A549 (cell line): ENCODE measurements at regions of chr10 and their contacts with region 1.

Region 1: DNA sequence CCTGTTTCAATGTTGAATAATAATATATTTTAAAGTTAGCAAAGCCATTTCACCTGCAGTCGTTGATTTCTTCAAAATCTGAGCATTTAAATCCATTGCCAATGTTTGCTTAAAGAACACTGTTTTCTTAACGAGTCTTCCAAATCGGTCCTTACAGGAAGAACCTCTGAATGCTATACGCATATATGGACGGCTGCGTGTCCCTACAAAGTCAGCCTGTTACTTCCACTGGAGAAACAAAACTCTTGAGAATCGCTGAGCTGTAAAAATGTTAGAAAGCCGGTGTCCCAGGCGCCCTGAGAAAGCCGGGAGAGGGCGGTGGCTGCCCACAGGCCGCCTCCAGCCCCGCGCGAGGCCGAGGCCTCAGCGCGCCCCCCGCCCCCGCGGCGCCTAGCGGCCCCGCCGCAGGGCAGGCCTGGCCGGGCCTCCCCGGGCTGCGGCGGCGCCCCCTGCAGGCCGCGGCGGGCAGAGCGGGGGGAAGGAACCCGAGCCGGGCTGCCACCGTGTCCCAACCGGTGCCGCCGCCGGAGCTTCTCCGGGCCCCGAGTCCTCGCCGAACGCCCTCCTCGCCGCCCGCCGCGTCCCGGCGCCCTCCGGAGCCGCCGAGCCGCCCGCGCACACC is at the start of gene FHIP2A:
- DNase-seq: peak; percentile 61 to 75
- ATAC-seq: peak; percentile 89
- H3K4me3 ChIP-seq: peak within 1 kb of the TSS; percentile 70
- H3K27ac ChIP-seq: peak within 1 kb of the TSS; percentile 88 to 100
- H3K4me1 ChIP-seq: peaks cover 36% of the 10 kb centered on the region
- CTCF ChIP-seq: peak; percentile 95
- EP300 ChIP-seq: no peak
- POLR2A ChIP-seq: 0 out of 2 replicates have a peak, but pooled peaks have one; percentile 19
- RAD21 ChIP-seq: peak; percentile 30 to 53; a peak in 3 of 5 replicates
- polyA plus RNA-seq, gene FHIP2A: 18.2 and 18.4 TPM in 2 replicates

Region 2: GRCh38 chr10:114603948-114604347 is 217.5 kb before region 1 on chr10:
- CTCF ChIA-PET with region 1: no interaction called
- POLR2A ChIA-PET with region 1: no interaction called
- DNase-seq: peak in 1 of 2 experiments; percentile 32
- ATAC-seq: peak in 1 of 2 experiments; percentile 76; a peak in 3 of 6 replicates
- H3K4me3 ChIP-seq: no peak overlapping the region
- H3K27ac ChIP-seq: peak overlapping the region; percentile 70 to 74
- H3K4me1 ChIP-seq: peaks cover 47% of the 10 kb centered on the region
- CTCF ChIP-seq: no peak
- EP300 ChIP-seq: no peak
- POLR2A ChIP-seq: no peak
- RAD21 ChIP-seq: no peak

Region 3: DNA sequence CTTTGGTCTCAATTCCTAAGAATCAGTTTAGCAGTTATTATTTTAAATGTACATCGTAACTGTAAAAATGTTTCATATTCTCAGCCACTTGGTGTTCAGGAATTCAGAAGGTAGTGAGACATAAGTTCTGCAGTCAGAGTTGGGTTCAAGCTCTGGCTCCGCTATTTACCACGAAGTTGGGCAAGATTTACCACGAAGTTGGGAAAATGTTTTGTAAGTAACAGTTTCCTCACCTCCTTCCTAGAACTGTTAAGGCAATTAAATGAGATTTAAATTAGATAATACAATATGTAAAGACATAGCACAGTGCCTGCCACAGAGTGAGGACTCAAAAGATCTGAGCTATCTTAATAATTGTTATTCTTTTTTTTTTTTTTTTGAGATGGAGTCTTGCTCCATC is 147.1 kb before region 1 on chr10:
- CTCF ChIA-PET with region 1: no interaction called
- POLR2A ChIA-PET with region 1: no interaction called
- DNase-seq: no peak
- ATAC-seq: no peak
- H3K4me3 ChIP-seq: no peak overlapping the region
- H3K27ac ChIP-seq: no peak overlapping the region
- H3K4me1 ChIP-seq: peaks cover 18% of the 10 kb centered on the region
- CTCF ChIP-seq: no peak
- EP300 ChIP-seq: no peak
- POLR2A ChIP-seq: no peak
- RAD21 ChIP-seq: no peak

Region 4: GRCh38 chr10:114758331-114758730 is 63.1 kb before region 1 on chr10:
- CTCF ChIA-PET with region 1: no interaction called
- POLR2A ChIA-PET with region 1: no interaction called
- DNase-seq: no peak
- ATAC-seq: no peak
- H3K4me3 ChIP-seq: no peak overlapping the region
- H3K27ac ChIP-seq: no peak overlapping the region
- H3K4me1 ChIP-seq: peaks cover 11% of the 10 kb centered on the region; the same call in 2 of the 3 replicates
- CTCF ChIP-seq: no peak
- EP300 ChIP-seq: no peak
- POLR2A ChIP-seq: no peak
- RAD21 ChIP-seq: no peak

Region 5: DNA sequence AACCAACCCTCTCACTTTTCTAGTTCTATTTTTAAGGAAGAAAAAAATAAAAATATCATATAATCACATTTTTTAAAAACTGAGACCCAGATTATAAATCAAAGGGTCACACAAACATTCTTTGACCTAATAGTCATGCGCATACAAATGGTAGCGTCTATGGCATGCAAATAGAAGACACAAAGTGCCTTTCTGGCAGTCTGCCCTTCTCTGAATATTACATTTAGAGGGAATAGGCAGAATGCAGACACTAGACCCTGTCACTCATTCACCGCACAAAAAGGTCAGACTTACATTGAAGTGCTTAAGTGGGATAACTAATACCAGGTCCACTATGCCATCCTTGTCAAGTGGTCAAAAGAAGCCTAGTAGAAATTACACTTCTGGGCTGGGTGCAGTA is 26.4 kb before region 1 on chr10:
- CTCF ChIA-PET with region 1: interaction called, 29 read pairs
- POLR2A ChIA-PET with region 1: no interaction called
- DNase-seq: no peak
- ATAC-seq: no peak
- H3K4me3 ChIP-seq: no peak overlapping the region
- H3K27ac ChIP-seq: no peak overlapping the region
- H3K4me1 ChIP-seq: no peaks in the 10 kb centered on the region
- CTCF ChIP-seq: no peak
- EP300 ChIP-seq: no peak
- POLR2A ChIP-seq: no peak
- RAD21 ChIP-seq: no peak

Region 6: DNA sequence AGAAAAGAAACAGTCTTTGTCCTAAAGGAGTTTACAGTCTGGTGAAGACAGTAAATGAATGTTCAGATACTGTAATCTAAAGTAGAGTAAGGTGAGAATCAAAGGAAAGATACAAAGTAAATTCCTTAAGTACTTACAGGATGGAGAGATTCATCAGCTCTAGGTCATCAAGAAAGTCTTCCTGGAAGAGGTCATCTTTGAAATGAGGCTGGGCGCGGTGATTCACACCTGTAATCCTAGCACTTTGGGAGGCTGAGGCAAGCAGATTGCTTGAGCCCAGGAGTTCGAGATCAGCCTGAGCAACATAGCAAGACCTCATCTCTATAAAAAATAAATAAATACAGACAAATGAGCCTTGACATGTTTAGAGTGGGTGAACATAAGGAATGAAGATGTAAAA is 18.5 kb after region 1 on chr10:
- CTCF ChIA-PET with region 1: interaction called, 10 read pairs
- POLR2A ChIA-PET with region 1: no interaction called
- DNase-seq: no peak
- ATAC-seq: no peak
- H3K4me3 ChIP-seq: no peak overlapping the region
- H3K27ac ChIP-seq: no peak overlapping the region
- H3K4me1 ChIP-seq: no peaks in the 10 kb centered on the region
- CTCF ChIP-seq: no peak
- EP300 ChIP-seq: no peak
- POLR2A ChIP-seq: no peak
- RAD21 ChIP-seq: no peak

Region 7: DNA sequence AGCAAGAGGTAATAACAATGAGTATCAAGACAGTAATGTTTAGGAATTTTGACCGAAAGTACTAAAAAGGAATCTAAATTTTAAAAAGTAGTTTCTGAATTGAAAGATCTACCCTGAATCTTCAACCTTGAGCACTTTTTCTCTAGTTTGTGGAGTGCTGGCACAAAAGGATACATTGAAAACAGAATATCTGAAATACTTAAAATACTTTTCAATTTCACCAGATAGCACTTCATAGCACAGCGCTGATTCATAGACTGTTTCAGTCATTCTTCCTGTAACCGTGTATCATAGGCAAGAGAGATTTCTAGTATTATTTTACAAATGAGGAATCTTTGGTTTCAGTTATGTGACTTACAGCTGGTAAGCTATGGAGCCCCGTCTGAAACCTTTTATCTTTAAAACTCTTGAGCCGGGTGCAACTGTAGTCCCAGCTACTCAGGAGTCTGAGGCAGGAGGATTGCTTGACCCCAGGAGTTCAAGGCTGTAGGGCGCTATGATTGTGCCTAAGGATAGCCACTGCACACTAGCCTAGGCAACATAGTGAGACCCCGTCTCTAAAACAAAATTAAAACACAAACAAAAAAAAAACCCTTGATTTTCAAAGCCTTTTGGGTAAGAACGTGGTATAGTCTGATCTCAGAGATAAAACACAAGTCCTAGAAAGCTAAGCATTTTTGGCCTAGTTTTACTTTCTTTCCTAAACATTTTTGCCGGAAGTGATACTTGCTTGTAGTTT is 35.3 kb after region 1 on chr10:
- CTCF ChIA-PET with region 1: interaction called, 11 read pairs
- POLR2A ChIA-PET with region 1: interaction called, 3 read pairs
- DNase-seq: peak in 1 of 2 experiments; percentile 28
- ATAC-seq: peak; percentile 75 to 91; a peak in 4 of 6 replicates
- H3K4me3 ChIP-seq: no peak overlapping the region
- H3K27ac ChIP-seq: peak overlapping the region; percentile 57 to 82
- H3K4me1 ChIP-seq: peaks cover 41% of the 10 kb centered on the region
- CTCF ChIP-seq: no peak
- EP300 ChIP-seq: no peak
- POLR2A ChIP-seq: no peak
- RAD21 ChIP-seq: no peak

Region 8: DNA sequence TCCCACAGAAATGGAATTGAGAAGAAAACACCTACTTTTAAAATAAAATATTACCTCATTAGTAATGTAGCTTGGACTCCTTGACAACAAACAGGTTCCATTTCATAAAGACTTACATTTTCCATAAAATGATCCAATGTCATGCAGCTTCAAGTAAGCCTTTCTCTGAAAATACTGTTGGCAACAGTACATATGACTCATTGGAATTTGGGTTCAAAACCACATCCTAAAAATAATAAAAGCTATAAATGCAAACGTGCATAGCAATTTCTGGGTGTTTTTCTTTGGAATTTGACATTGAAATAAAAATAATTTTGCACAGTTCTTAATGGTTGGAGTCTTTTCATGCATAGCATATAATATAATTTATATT is 48.1 kb after region 1 on chr10:
- CTCF ChIA-PET with region 1: interaction called, 12 read pairs
- POLR2A ChIA-PET with region 1: no interaction called
- DNase-seq: no peak
- ATAC-seq: no peak
- H3K4me3 ChIP-seq: no peak overlapping the region
- H3K27ac ChIP-seq: no peak overlapping the region
- H3K4me1 ChIP-seq: peaks cover 12% of the 10 kb centered on the region; the same call in 2 of the 3 replicates
- CTCF ChIP-seq: no peak
- EP300 ChIP-seq: no peak
- POLR2A ChIP-seq: no peak
- RAD21 ChIP-seq: no peak